Activated CD4-positive, alpha-beta memory T cell treated with anti-CD3 and anti-CD28 coated beads for 36 hours (primary cell): ENCODE measurements at regions of chr16 and their contacts with region 1.

Region 1: DNA sequence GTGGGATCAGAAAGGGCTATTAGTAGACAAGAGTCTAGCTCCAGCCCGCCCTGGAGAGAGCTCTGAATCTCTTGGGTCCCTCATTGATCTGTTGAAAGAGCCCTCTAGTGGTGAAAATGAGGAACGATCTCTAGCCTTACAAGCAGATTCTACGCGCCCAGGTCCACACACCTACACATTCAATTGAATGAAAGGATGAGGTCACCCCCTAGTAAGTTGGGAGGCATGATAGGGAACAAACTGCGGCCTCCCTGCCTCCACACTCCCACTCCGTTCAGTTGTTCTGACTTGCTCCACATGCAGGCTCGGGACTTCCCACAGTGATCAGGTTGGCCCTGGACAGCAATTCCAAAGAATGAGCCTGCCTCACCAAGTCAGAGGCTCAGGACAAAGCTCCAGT is 2.9 kb upstream of the CACNG3 start:
- DNase-seq: peak; percentile 49
- H3K4me3 Mint-ChIP-seq: no peak overlapping the region
- H3K27ac Mint-ChIP-seq: no peak overlapping the region
- H3K4me1 Mint-ChIP-seq: peaks cover 10% of the 10 kb centered on the region
- H3K27me3 Mint-ChIP-seq: peaks cover 52% of the 10 kb centered on the region

Region 2: DNA sequence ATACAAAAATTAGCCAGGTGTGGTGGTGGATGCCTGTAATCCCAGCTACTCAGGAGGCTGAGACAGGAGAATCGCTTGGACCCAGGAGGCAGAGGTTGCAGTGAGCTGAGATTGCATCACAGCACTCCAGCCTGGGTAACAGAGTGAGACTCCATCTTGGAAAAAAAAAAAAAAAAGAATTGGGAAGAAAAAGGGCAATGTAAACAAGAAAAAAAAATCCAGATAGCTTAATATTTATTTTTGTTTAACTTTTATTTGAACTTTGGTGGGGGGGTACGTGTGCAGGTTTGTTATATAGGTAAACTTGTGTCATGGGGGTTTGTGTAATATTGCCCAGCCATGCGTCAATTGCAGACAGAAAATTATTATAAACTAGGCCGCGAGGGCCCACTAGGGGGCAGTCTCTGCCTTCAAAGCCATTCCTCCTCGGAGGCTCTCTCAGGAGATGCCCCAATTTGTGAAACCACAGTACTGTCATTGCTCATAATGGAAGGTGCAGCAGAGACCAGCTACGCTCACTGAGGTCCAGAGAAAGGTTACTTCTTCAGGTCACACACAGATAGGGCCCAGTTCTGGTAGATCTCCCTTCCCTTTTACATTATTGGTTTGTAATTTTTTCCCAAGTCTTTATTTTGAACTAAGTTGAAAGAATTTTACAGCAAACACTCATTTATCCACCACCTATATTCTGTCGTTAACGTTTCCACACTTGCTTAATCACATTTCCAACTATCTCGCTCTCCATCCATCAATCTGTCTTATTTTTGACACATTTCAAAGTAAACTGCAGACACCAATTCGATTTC is 211.2 kb before region 1 on chr16:
- CTCF ChIA-PET with region 1: interaction called, 92 read pairs
- POLR2A ChIA-PET with region 1: no interaction called
- intact Hi-C with region 1: loop called (anchors 1 kb)
- DNase-seq: peak; percentile 90
- H3K4me3 Mint-ChIP-seq: no peak overlapping the region
- H3K27ac Mint-ChIP-seq: no peak overlapping the region
- H3K4me1 Mint-ChIP-seq: peaks cover 8% of the 10 kb centered on the region
- H3K27me3 Mint-ChIP-seq: no peaks in the 10 kb centered on the region

Region 3: DNA sequence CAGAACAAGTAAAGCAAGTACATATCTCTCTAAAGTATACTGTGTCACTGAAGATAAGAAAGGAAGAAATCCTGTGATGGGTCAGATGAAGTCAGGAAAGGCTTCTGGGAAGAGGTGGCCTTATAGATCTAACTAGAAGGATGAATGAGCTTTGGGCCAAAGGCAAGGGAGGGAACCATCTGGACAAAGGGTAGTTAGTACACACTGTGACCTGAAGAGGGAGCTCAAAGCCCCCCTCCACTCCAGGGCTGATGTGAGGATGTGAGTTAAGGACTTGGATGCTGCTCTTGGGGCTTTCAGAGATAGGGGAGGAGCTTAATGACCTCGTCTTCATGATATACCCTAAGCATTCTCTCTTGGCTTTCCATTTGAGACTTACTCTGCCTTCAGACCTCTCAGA is 182.3 kb before region 1 on chr16:
- CTCF ChIA-PET with region 1: interaction called, 138 read pairs
- POLR2A ChIA-PET with region 1: interaction called, 4 read pairs
- intact Hi-C with region 1: loop called (anchors 1 kb)
- DNase-seq: peak; percentile 66
- H3K4me3 Mint-ChIP-seq: no peak overlapping the region
- H3K27ac Mint-ChIP-seq: no peak overlapping the region
- H3K4me1 Mint-ChIP-seq: peaks cover 39% of the 10 kb centered on the region
- H3K27me3 Mint-ChIP-seq: no peaks in the 10 kb centered on the region

Region 4: DNA sequence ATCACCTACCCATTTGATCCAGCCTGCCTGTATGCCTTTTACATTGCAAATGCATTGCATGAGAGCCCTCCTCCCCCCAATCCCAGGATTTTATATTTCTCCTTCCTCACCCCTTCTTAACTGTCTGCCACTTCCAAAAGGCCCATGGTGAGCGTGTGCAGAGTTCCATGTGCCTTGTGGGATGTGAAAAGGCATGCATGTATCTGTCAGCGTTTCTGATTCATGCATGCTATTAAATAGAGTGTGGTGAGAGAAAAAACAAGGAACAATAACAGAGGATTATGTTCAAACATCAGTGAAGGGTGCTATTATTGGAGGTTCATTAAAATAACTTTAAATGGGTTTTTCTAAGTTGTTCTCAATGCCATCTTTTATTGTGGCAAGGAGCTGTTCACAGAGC is 58.0 kb before region 1 on chr16:
- CTCF ChIA-PET with region 1: interaction called, 16 read pairs
- POLR2A ChIA-PET with region 1: no interaction called
- intact Hi-C with region 1: no loop called
- DNase-seq: no peak
- H3K4me3 Mint-ChIP-seq: no peak overlapping the region
- H3K27ac Mint-ChIP-seq: no peak overlapping the region
- H3K4me1 Mint-ChIP-seq: peaks cover 24% of the 10 kb centered on the region
- H3K27me3 Mint-ChIP-seq: no peaks in the 10 kb centered on the region

Region 5: DNA sequence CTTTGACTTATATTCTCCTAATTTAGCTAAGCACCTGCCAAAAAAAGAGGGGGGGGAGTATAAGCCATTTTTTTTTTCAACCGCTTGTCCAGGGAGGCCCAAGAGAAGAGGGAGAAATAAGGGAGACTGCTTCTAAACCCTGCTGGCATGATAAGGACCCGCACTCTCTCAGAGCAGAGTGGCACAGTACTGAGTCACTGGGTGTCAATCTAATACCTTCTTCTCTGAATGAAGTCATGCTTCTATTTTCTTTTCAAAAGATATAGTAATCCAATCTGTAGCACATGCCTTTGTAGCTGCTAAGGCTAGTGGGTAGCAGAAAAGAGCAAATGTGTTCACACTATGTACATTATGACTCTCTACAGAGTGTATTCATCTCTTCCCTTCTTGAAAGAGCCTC is 32.0 kb before region 1 on chr16:
- CTCF ChIA-PET with region 1: interaction called, 15 read pairs
- POLR2A ChIA-PET with region 1: no interaction called
- intact Hi-C with region 1: no loop called
- DNase-seq: no peak
- H3K4me3 Mint-ChIP-seq: no peak overlapping the region
- H3K27ac Mint-ChIP-seq: no peak overlapping the region
- H3K4me1 Mint-ChIP-seq: no peaks in the 10 kb centered on the region
- H3K27me3 Mint-ChIP-seq: no peaks in the 10 kb centered on the region

Region 6: GRCh38 chr16:24315343-24315742 is 62.2 kb after region 1 on chr16:
- CTCF ChIA-PET with region 1: no interaction called
- POLR2A ChIA-PET with region 1: no interaction called
- intact Hi-C with region 1: no loop called
- DNase-seq: no peak
- H3K4me3 Mint-ChIP-seq: no peak overlapping the region
- H3K27ac Mint-ChIP-seq: no peak overlapping the region
- H3K4me1 Mint-ChIP-seq: no peaks in the 10 kb centered on the region
- H3K27me3 Mint-ChIP-seq: peaks cover 29% of the 10 kb centered on the region

Region 7: DNA sequence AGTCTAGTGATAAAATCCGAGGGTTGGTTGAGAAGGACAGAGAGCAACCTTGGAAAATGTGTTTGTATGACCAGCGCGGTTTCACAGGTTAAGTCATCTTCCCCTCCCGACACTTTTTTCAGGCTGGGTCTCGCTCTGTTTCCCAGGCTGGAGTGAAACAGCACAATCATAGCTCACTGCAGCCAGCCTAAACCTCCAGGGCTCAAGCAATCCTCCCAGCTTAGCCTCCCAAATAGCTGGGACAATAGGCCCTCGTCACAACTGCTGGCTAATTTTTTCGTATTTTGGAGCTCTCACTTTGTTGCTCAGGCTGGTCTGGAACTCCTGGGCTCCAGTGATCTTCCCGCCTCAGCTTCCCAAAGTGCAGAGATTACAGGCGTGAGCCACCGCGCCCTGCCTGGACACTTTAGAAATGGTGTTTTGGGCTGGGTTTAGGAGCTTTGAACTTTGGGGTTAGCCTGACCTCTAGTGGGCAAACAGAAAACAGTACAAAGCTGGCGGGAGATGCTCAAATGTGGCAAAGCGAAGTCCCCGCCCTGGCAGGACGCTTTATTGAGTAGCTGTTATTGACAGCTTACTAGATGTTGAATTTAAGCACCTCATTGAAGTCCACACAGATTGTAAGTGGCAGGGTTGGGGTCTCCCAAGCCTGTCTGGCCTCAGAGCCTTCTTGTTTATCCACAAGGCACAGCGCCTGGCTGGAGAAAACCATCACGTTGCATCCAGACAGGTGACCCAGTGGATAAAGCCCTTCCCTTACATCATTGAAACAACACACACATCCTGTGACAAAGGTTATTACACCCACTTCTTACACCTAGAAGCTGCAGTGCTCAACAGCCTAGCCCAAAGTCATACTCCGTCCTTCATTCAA is 251.5 kb after region 1 on chr16:
- CTCF ChIA-PET with region 1: interaction called, 16 read pairs
- POLR2A ChIA-PET with region 1: no interaction called
- intact Hi-C with region 1: loop called (anchors 10 kb)
- DNase-seq: peak; percentile 67
- H3K4me3 Mint-ChIP-seq: no peak overlapping the region
- H3K27ac Mint-ChIP-seq: no peak overlapping the region
- H3K4me1 Mint-ChIP-seq: no peaks in the 10 kb centered on the region
- H3K27me3 Mint-ChIP-seq: peaks cover 6% of the 10 kb centered on the region